ENCODE measurements at regions of chr18 and their contacts with region 1.

Region 1: DNA sequence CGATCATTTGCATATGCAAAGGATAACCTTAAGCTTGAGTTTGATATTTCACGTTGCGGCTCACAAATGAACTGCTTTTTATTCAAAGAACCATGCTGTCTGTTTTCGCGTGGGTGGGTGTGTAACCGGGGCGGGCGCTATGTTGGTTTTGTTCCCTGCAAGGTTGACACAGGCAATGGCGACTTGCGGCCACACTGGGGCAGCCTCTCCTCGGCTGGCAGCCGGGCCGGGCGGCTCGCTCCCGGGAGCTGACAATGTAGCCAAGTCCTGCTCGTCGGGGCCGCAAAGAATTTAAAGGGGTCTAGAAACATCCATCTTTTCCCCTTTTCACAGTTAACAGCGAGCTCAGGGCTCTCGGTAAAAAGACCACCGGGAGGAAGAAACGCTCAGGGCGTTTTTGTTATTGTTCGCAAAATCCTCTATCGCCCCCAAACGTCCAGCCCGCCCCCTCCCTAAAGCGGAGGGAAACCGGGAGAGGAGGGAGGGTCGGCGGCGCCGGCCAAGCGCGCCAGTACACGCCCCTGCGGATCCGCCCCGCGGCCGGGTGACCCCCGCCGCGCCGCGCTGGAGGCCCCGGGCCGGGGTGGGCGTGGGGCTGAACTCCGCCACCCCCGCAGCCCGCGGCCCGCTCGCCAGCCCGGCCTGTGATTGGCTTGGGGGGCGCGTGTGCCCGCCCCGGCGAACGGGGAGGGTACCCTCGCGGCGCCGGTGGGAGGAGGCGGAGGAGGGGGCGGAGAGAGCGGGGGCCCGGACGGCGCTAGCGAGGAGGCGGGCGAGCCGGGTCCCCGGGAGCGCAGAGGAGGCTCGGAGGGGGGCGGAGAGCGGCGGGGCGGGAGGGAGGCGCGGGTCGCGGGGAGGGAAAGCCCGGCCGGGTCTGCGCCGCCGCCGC is at the start of gene NEDD4L:
- DNase-seq: peak; percentile 90
- H3K4me3 ChIP-seq: peak within 1 kb of the TSS; percentile 67 to 98 (median 84)
- H3K27ac ChIP-seq: peak within 1 kb of the TSS; percentile 75 to 93 (median 88)
- H3K4me1 ChIP-seq: peaks cover 20 to 30% of the 10 kb centered on the region in 2 donors
- H3K27me3 ChIP-seq: no peaks in the 10 kb centered on the region
- CTCF ChIP-seq: peak; percentile 79 to 95 (median 85)
- POLR2A ChIP-seq: peak in 1 of 2 donors; percentile 74
- total RNA-seq, gene NEDD4L: 61.5 to 105 (median 78.0) TPM

Region 2: DNA sequence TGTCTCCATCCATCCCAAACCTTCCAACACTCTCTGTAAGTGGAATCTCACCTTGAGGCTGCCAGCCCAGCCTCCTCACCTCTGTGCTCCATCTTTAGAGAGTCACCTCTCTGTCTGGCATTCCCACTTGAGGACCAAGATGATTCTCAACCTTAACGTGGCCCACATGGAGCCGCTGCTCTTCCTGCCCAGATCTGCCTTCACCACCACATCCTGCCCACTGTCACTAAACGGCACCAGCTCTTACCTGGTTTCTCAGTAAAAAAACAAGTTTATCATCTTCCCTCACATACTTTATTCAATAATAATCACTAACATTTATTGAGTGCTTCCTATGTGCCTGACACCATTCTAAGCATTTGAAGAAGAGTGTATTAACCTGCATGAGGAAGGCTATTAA is 80.7 kb after region 1 on chr18:
- intact Hi-C with region 1: loop called (anchors 5 kb)
- DNase-seq: no peak
- H3K4me3 ChIP-seq: no peak overlapping the region
- H3K27ac ChIP-seq: no peak overlapping the region
- H3K4me1 ChIP-seq: peaks cover 7 to 13% of the 10 kb centered on the region in 2 donors
- H3K27me3 ChIP-seq: no peaks in the 10 kb centered on the region
- CTCF ChIP-seq: no peak
- POLR2A ChIP-seq: no peak